Heart left ventricle (tissue), 16 donors: ENCODE measurements at regions of chr15 and their contacts with region 1.

Region 1: DNA sequence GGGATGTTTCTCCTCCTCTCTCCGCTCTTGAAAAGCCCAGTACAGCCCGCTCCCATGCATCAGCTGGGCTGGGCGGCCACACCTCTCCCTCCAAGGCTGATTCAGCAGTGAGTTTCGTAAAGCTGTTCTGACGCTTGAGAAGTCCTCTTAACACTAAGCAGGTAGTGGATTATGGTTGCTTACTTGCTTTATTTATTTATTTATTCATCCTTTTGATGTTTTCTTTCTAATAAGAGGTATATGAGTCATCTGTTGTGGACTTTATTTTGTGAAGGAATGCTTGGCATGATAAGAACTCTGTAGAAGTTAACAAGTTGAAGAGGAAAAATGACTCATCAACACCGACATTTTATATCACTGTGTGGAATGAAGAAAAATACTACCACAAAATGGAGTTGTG is 285.0 kb downstream of the SQOR start:
- DNase-seq: no peak
- ATAC-seq: peak in 2 of 4 donors; percentile 65
- H3K4me3 ChIP-seq: no peak overlapping the region
- H3K27ac ChIP-seq: peak overlapping the region in 11 of 12 donors; percentile 37 to 76 (median 59)
- H3K4me1 ChIP-seq: peaks cover 0 to 33% (median 10%) of the 10 kb centered on the region in 12 donors
- H3K27me3 ChIP-seq: no peaks in the 10 kb centered on the region
- CTCF ChIP-seq: no peak
- POLR2A ChIP-seq: no peak

Region 2: DNA sequence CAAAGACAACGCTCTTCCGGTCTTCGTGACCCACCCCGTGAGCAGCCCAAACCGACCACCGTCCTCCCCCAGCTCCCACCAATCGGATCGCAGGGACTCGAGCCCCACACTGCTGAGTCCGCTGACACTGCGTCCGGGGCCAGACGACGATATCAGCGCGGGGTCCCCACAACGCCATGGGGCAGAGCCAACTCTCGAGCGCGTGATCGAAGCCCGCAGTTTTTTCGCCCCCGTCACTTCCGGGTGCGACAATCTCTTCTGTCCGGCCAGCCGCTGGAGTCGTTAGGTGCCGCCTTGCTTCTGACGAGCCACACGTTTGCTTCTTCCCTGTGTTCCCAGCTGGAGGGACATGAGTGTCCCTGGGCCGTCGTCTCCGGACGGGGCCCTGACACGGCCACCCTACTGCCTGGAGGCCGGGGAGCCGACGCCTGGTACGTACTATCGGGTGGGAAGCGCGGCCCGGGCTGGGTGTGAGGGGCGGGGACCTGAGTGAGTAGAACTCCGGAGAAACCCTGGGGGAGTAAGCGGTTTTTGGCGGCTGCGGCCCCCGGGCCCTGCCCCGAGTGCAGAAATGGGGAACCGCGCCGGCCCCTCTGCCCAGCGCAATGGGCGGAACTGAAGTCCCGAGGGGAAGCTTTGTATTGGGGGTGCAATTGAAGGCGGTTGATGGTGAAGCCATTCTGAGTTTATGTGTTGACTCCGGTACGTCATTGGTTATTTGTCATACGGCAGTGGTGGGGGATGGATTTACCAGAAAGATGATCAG is 332.5 kb before region 1 on chr15 and contains the start of gene BLOC1S6:
- intact Hi-C with region 1: no loop called
- DNase-seq: peak; percentile 89 to 93 (median 92)
- ATAC-seq: peak; percentile 92 to 95 (median 94)
- H3K4me3 ChIP-seq: peak within 1 kb of the TSS; percentile 72 to 98 (median 92)
- H3K27ac ChIP-seq: peak within 1 kb of the TSS; percentile 94 to 99 (median 98)
- H3K4me1 ChIP-seq: peaks cover 6 to 55% (median 32%) of the 10 kb centered on the region in 12 donors
- H3K27me3 ChIP-seq: no peaks in the 10 kb centered on the region
- CTCF ChIP-seq: no peak
- POLR2A ChIP-seq: peak in 1 of 2 donors; percentile 63
- total RNA-seq, gene BLOC1S6: 21.4 to 38.9 (median 27.0) TPM

Region 3: DNA sequence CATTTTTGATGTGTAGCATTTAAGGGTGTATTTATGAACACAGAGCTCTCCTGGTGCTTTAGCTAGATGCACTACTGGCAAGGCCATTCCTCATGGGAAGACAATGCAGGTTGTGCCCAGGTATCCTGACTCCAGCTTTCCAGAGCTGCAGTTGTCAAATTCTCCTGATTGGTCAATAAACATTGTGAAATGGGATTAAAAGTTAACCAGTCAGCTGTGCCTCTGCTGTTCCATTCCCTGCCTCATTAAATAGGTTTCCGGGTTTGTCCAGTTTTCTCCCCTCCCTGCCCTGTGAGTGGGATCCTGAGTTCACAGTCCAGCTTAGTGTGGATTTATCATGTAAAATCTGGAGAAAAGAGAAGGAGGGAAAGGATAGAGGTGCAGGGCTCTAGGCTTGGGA is 77.7 kb before region 1 on chr15:
- intact Hi-C with region 1: no loop called
- DNase-seq: no peak
- ATAC-seq: no peak
- H3K4me3 ChIP-seq: no peak overlapping the region
- H3K27ac ChIP-seq: no peak overlapping the region
- H3K4me1 ChIP-seq: no peaks in the 10 kb centered on the region
- H3K27me3 ChIP-seq: peaks cover 0 to 13% (median 0%) of the 10 kb centered on the region in 9 donors
- CTCF ChIP-seq: no peak
- POLR2A ChIP-seq: no peak

Region 4: GRCh38 chr15:46080016-46080415 is 160.2 kb after region 1 on chr15:
- intact Hi-C with region 1: loop called in 3 of 10 experiments (anchors 5 to 10 kb)
- DNase-seq: peak in 1 of 5 donors; percentile 62
- ATAC-seq: peak in 1 of 4 donors; percentile 44
- H3K4me3 ChIP-seq: no peak overlapping the region
- H3K27ac ChIP-seq: peak overlapping the region in 1 of 12 donors; percentile 16
- H3K4me1 ChIP-seq: peaks cover 0 to 13% (median 2%) of the 10 kb centered on the region in 12 donors
- H3K27me3 ChIP-seq: no peaks in the 10 kb centered on the region
- CTCF ChIP-seq: no peak
- POLR2A ChIP-seq: no peak

Region 5: GRCh38 chr15:46091860-46092450 is 172.1 kb after region 1 on chr15:
- intact Hi-C with region 1: loop called in 3 of 10 experiments (anchors 10 kb)
- DNase-seq: peak in 1 of 5 donors; percentile 10
- ATAC-seq: no peak
- H3K4me3 ChIP-seq: no peak overlapping the region
- H3K27ac ChIP-seq: no peak overlapping the region
- H3K4me1 ChIP-seq: peaks cover 0 to 24% (median 2%) of the 10 kb centered on the region in 12 donors
- H3K27me3 ChIP-seq: no peaks in the 10 kb centered on the region
- CTCF ChIP-seq: peak; percentile 26 to 57 (median 39)
- POLR2A ChIP-seq: no peak